ENCODE measurements at regions of chr6 and their contacts with region 1.

Region 1: DNA sequence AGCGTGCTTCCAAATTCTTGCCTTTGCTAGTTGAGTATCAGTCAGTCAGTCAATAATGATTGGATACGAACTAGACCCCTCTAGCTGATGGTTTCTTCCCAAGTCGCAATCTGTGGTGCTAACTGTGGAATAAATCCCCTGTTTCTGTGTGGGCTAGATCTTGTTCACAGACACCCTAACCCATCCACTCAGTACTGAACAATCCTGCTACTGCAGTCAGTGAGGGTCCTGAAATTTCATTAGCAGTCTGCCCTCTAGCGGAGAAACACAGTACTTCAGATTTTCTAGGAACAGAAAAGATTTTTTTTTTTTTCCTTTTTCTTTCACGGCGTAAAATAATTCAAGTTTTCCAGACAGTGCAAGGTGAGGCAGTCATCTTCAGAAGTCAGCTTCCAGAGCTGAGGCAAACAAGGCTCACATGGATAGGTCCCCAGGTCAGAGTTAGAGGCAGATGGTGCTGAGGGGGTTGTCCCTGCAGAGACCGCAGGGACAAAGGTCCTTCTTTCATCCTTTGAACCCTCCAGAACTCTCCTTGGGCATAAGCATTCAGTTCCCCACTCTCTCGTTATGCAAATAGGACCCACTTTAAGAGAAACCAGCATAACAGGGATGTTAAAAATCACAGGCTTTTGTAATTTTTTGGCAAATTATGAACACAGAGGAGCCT is 119.6 kb downstream of the SCML4 start:
- DNase-seq: peak in 1 of 2 donors; percentile 49
- ATAC-seq: peak in 6 of 8 donors; percentile 52 to 73 (median 62)
- H3K4me3 ChIP-seq: peak overlapping the region in 2 of 10 donors; percentile 6 to 19
- H3K27ac ChIP-seq: no peak overlapping the region
- H3K4me1 ChIP-seq: peaks cover 0 to 4% (median 0%) of the 10 kb centered on the region in 9 donors
- H3K27me3 ChIP-seq: peaks cover 0 to 3% (median 0%) of the 10 kb centered on the region in 7 donors
- CTCF ChIP-seq: peak; percentile 78 to 89 (median 84)

Region 2: GRCh38 chr6:107132330-107132954 is 572.0 kb before region 1 on chr6:
- intact Hi-C with region 1: loop called in 1 of 10 experiments (anchors 10 kb)
- DNase-seq: no peak
- ATAC-seq: no peak
- H3K4me3 ChIP-seq: no peak overlapping the region
- H3K27ac ChIP-seq: no peak overlapping the region
- H3K4me1 ChIP-seq: peaks cover 0 to 13% (median 4%) of the 10 kb centered on the region in 9 donors
- H3K27me3 ChIP-seq: no peaks in the 10 kb centered on the region
- CTCF ChIP-seq: peak in 8 of 9 donors; percentile 31 to 60 (median 48)

Region 3: DNA sequence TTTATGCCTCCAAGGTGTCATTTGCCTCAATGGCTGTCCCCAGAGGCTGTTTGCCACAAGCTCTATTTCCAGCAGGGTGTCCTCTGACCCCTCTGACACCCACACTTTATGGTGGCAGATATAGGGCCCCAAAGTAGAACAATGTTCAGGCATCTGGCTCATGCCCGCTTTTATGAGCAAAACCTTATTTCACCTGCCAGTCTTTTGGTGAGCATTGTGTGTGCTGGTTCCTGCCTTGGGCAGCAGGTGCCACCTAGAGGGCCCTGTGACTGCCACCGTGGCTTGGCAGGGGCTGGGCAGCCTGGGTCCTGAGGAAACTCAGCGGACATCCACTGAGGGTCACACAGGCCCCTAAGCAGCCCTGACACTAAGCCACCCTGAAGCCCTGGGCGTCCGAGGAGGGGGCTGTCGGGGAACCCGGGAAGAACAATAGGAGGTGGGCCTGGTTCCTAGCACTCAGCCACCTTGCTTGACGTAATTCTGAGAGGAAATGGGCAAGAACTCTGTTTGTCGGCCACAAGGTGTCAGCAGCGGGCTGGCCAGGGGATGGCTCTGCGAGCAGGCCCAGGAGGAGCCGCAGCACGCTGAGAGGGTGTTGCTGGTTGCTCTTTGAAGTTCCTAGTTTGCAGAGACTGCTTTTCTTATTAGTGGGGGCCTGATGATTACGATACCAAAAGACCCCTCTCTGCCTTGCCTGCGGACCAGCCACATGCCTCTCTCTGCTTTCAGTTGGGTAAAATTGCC is 29.3 kb before region 1 on chr6:
- intact Hi-C with region 1: loop called in 5 of 10 experiments (anchors 1 to 2 kb)
- DNase-seq: peak; percentile 88 to 89
- ATAC-seq: peak; percentile 85 to 96 (median 92)
- H3K4me3 ChIP-seq: peak overlapping the region in 7 of 10 donors; percentile 19 to 43 (median 28)
- H3K27ac ChIP-seq: peak overlapping the region in 2 of 10 donors; percentile 23 to 45
- H3K4me1 ChIP-seq: peaks cover 7 to 31% (median 19%) of the 10 kb centered on the region in 9 donors
- H3K27me3 ChIP-seq: no peaks in the 10 kb centered on the region
- CTCF ChIP-seq: peak; percentile 87 to 95 (median 92)

Measured in heart right ventricle (tissue), 16 donors.